ENCODE measurements at regions of chr20 and their contacts with region 1.

Region 1: GRCh38 chr20:16476032-16476431 is 97.2 kb downstream of the KIF16B start:
- DNase-seq: peak; percentile 34
- CTCF ChIP-seq: peak; percentile 65

Region 2: DNA sequence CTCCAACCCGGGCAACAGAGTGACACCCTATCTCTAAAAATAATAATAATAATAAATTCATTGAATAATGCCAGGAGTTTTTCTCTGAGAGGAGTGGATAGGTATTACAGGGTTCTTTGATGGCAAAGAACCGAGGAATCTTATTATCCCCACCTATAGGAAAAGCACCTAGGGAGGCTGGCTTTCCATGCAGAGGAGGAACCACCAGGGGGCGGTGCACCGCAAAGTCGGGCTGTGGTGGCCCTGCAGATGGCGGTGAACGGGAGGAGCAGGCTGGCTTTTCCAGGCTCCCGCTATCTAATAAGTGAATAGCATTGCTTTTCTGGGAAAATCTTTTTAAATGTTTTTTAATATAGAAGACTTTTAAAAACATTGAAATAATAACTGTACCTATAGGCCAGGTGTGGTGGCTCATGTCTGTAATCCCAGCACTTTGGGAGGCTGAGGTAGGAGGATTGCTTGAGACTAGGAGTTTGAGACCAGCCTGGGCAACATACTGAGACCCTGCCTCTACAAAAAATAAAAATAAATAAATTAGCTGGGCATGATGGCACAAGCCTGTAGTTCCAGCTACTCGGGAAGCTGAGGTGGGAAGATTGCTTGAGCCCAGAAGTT is 766.9 kb before region 1 on chr20:
- CTCF ChIA-PET with region 1: interaction called, 49 read pairs
- POLR2A ChIA-PET with region 1: no interaction called
- DNase-seq: peak; percentile 64
- CTCF ChIP-seq: peak; percentile 71

Region 3: GRCh38 chr20:16279320-16279719 is 196.7 kb before region 1 on chr20:
- CTCF ChIA-PET with region 1: interaction called, 15 read pairs
- POLR2A ChIA-PET with region 1: no interaction called
- DNase-seq: no peak
- CTCF ChIP-seq: no peak

Region 4: DNA sequence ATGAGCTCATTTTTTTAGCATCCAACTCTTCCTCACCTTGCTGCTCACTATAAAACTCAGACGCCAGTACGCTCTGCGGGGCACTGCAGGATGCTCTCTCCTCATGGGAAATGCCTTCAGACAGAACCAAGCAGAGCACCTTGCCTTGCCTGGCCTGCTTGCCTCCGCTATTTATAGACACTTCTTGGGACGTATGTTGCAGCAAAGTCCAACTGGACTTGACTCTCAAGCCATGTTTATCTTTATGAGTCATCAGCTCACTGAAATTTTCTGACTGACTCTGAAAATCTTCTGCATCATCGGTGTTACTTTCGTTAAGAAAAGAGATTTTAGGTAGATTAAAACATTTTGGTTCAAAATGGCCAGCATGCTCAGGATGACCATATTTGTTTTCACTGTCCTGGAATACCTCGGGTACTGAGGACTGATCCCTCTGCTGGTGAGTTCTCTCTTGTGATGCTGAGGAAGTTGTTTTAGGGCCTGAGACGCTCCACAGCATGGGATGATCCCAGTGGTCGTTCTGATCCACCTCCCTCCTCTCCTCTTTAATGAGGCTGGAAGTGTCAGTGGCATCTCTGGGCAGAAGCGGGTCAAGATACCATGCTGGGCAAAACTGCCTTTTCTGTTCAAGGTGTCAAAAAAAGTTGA is 107.3 kb before region 1 on chr20:
- CTCF ChIA-PET with region 1: no interaction called
- POLR2A ChIA-PET with region 1: no interaction called
- DNase-seq: no peak
- CTCF ChIP-seq: no peak

Region 5: GRCh38 chr20:16493486-16493885 is 17.5 kb after region 1 on chr20:
- CTCF ChIA-PET with region 1: interaction called, 33 read pairs
- POLR2A ChIA-PET with region 1: no interaction called
- DNase-seq: no peak
- CTCF ChIP-seq: no peak

Measured in GM10248 (cell line).